ENCODE measurements at regions of chr2 and their contacts with region 1.

Region 1: DNA sequence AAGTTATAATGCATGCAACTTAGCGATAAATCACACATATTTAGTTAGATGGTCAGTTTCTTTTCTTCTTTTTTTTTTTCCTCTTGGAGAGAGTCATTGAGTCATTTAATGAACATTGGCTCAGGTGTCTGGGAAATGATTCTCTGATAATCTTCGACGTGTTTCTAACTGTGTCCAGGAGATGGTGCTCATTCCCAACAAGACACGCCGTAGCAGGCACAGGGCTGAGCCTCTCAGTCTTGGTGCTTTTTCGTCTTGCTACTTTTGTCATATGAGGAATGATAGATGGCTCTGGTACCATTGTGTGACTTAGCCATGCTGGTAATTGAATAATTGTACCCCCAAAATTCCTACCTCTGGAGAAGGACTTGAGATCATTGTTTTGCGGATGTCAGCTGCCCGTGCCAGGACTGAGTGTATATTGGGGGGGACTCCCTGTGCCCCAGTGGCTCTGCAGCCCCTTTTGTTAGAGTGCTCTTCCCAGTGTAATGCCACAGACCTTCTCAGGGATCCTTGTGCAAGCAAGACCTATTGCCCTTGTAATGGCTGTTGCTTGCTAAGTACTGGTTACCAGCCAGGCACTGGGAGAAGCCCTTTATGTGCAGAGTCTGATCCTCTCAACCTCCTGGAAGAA is 107.6 kb upstream of the CYRIA start:
- DNase-seq: no peak
- H3K4me3 Mint-ChIP-seq: no peak overlapping the region
- H3K27ac Mint-ChIP-seq: no peak overlapping the region
- H3K4me1 Mint-ChIP-seq: no peaks in the 10 kb centered on the region
- H3K27me3 Mint-ChIP-seq: peaks cover 18% of the 10 kb centered on the region

Region 2: GRCh38 chr2:16899958-16900357 is 126.8 kb after region 1 on chr2:
- intact Hi-C with region 1: loop called (anchors 5 kb)
- DNase-seq: no peak
- H3K4me3 Mint-ChIP-seq: no peak overlapping the region
- H3K27ac Mint-ChIP-seq: no peak overlapping the region
- H3K4me1 Mint-ChIP-seq: no peaks in the 10 kb centered on the region
- H3K27me3 Mint-ChIP-seq: no peaks in the 10 kb centered on the region